Activated CD4-positive, alpha-beta memory T cell treated with anti-CD3 and anti-CD28 coated beads, Interleukin-2, amount 10 ng/mL, durations not matched to agents 7 days and 5 days (primary cell): ENCODE measurements at regions of chr7 and their contacts with region 1.

Region 1: GRCh38 chr7:1169409-1170368 is 9.7 kb upstream of the ZFAND2A start:
- DNase-seq: peak; percentile 97
- H3K4me3 Mint-ChIP-seq: peak overlapping the region; percentile 87
- H3K27ac Mint-ChIP-seq: peak overlapping the region; percentile 94
- H3K4me1 Mint-ChIP-seq: peaks cover 20% of the 10 kb centered on the region
- H3K27me3 Mint-ChIP-seq: no peaks in the 10 kb centered on the region

Region 2: GRCh38 chr7:1137510-1138167 is 32.0 kb before region 1 on chr7:
- CTCF ChIA-PET with region 1: interaction called, 13 read pairs
- POLR2A ChIA-PET with region 1: interaction called, 8 read pairs
- DNase-seq: no peak
- H3K4me3 Mint-ChIP-seq: peak overlapping the region; percentile 85
- H3K27ac Mint-ChIP-seq: peak overlapping the region; percentile 65
- H3K4me1 Mint-ChIP-seq: peaks cover 22% of the 10 kb centered on the region
- H3K27me3 Mint-ChIP-seq: no peaks in the 10 kb centered on the region